ENCODE measurements at regions of chr3 and their contacts with region 1.

Region 1: GRCh38 chr3:43105596-43106292 is at the start of gene POMGNT2:
- DNase-seq: peak; percentile 88 to 93 (median 91)
- H3K4me3 ChIP-seq: peak within 1 kb of the TSS; percentile 92
- H3K27ac ChIP-seq: peak within 1 kb of the TSS; percentile 69 to 79
- H3K4me1 ChIP-seq: peaks cover 8% of the 10 kb centered on the region
- H3K27me3 ChIP-seq: no peaks in the 10 kb centered on the region
- CTCF ChIP-seq: peak in 1 of 3 donors; percentile 23
- EP300 ChIP-seq: no peak
- POLR2A ChIP-seq: peak; percentile 81
- total RNA-seq, gene POMGNT2: 26.7 to 51.7 (median 43.7) TPM

Region 2: DNA sequence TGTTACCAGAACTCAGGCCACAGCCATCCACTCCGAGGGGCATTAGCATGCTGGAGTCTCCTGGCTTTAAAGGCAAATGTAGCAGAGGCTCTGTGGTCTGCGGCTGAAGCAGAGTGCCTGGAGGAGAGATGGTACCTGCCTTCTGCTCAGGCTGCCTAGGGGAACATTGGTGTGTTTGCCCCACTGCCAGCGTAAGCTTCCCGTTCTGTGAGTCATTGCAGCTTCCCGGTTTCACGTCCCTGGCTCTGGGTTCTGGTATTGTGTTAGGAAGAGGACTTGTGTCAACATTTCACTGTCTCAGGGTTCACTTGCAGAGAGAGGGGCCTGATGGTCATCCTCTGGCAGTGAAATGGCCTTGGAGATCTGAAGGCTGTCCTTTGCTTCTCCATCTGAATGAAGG is 124.8 kb before region 1 on chr3:
- intact Hi-C with region 1: loop called in 1 of 4 experiments (anchors 10 kb)
- DNase-seq: peak in 1 of 5 donors; percentile 54
- H3K4me3 ChIP-seq: peak overlapping the region; percentile 1
- H3K27ac ChIP-seq: peak overlapping the region in 1 of 2 donors; percentile 21
- H3K4me1 ChIP-seq: peaks cover 16% of the 10 kb centered on the region
- H3K27me3 ChIP-seq: no peaks in the 10 kb centered on the region
- CTCF ChIP-seq: no peak
- EP300 ChIP-seq: no peak
- POLR2A ChIP-seq: no peak

Region 3: DNA sequence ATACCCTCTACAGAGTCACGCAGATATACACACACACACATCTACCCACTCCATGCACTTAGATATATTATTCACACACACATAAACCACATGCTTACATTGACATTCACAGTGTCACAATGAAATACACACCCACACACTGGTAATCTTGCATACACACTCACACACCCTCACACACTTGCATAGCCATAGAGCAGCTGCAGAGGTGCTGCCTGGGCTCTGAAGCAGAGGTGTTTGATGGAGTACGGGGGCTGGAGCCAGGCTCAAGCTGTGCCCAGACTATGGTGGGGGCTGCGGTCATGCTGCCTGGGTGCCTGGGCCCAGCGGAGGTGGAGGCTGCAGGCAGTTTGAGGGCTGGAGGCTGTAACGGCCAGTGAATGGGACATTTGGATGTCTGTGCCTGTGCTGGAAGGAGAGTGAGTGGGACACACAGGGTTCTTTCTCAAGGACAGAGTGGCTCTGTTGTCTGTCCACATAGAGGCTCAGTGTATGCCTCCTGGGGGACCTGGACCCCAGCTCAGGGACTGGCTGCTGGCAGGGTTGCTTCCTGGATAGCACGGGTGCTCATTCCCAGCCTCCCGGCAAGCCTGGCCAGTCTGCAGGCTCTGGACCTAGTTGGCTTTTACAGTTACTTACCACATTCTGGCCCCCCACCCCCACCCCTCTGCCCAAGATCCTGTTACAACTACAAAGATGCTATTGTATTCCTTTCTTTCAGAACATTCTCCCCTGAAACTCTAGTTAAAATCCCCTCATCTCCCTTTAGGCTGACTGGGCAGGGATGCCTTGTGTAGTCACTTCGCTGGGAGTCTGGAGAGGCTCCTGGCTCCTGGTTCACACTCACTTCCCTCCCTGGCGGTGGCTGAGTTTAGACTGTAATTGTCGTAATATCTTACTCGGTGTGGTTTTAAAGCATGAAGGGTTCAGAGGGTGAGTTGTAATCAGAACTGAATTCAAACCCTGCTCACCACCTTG is 114.1 kb before region 1 on chr3:
- intact Hi-C with region 1: loop called in 2 of 4 experiments (anchors 10 kb)
- DNase-seq: no peak
- H3K4me3 ChIP-seq: no peak overlapping the region
- H3K27ac ChIP-seq: no peak overlapping the region
- H3K4me1 ChIP-seq: peaks cover 4% of the 10 kb centered on the region
- H3K27me3 ChIP-seq: no peaks in the 10 kb centered on the region
- CTCF ChIP-seq: no peak
- EP300 ChIP-seq: no peak
- POLR2A ChIP-seq: no peak

Region 4: GRCh38 chr3:43155464-43156121 is 49.8 kb after region 1 on chr3:
- intact Hi-C with region 1: loop called in 1 of 4 experiments (anchors 5 kb)
- DNase-seq: peak; percentile 52 to 80 (median 77)
- H3K4me3 ChIP-seq: no peak overlapping the region
- H3K27ac ChIP-seq: peak overlapping the region in 1 of 2 donors; percentile 67
- H3K4me1 ChIP-seq: peaks cover 13% of the 10 kb centered on the region
- H3K27me3 ChIP-seq: no peaks in the 10 kb centered on the region
- CTCF ChIP-seq: peak in 2 of 3 donors; percentile 37 to 63
- EP300 ChIP-seq: no peak
- POLR2A ChIP-seq: no peak

Region 5: DNA sequence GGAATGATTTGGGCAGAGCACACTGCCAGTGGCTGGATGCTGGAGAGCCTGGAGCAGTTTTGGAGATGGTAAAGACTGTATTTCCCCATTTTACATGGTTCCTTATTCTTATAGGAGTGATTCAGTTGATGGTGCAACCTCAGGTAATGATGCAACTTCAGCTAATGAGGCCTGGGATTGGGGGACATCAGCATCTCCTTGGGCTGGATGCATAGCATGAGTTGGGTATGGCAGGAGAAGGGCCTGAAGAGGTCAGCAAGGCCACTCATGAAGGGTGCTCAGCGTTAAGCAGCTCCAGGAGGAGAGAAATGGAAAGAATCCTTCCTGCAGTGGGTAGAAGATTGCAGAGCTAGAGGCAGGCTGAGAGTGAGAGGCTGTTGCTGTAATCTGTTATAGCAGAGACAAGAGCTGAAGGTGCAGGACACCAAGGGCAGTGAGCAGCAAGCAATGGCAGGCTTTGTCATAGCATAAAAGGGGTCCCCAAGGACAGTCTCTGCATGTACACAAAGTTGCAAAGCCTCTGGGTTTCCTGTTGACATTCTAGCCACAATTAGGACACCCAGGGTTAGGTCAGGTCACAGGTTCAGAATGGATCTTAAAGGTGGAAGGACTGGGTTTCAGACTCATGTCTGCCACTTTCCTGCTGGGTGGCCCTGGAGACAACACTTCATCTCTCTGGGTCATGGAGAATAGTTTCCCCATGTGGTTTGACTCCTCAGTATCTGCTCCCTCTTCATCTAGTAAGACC is 151.1 kb after region 1 on chr3:
- intact Hi-C with region 1: no loop called
- DNase-seq: no peak
- H3K4me3 ChIP-seq: no peak overlapping the region
- H3K27ac ChIP-seq: no peak overlapping the region
- H3K4me1 ChIP-seq: no peaks in the 10 kb centered on the region
- H3K27me3 ChIP-seq: no peaks in the 10 kb centered on the region
- CTCF ChIP-seq: no peak
- EP300 ChIP-seq: no peak
- POLR2A ChIP-seq: no peak

Measured in ovary (tissue), 10 donors.